ENCODE measurements at regions of chr10 and their contacts with region 1.

Region 1: DNA sequence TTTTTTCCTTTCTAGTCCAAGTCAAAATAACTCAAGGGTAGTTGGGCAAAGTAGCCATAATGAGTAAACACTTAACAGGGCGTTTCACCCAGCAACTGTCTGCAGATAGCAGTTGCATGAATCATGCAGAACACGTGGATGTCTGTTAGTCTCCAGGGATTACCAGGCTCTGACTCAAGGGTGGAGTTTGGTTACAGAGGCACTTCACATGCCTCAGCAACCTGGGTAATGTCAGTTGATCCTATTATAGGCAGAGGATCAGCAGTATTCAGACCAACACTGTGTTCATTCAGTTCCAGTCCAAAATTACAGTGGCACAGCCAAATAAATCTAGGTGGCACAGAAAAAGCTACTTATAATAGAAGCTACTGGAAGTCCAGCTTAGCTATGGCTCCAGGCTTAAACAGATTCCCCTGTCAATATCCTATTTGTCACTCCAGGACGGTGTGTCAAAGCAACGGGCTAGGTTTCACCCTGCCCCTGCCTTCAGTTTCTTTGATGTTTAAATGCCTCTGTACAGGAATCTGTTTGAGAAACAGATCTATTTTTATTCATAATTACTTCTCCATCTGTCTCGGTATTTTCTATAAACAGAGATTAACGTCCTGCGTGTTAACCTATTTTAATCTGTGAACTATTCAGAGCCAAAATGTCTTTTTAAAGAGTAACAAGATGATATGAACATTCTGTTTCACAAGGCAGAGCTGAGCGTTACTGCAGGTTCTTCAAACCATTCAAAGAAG is 162.7 kb upstream of the AKR1E2 start:
- DNase-seq: peak; percentile 15
- ATAC-seq: peak; percentile 64
- H3K4me3 ChIP-seq: no peak overlapping the region
- H3K27ac ChIP-seq: no peak overlapping the region
- H3K4me1 ChIP-seq: no peaks in the 10 kb centered on the region
- H3K27me3 ChIP-seq: no peaks in the 10 kb centered on the region
- CTCF ChIP-seq: no peak
- EP300 ChIP-seq: no peak
- POLR2A ChIP-seq: no peak
- RAD21 ChIP-seq: no peak

Region 2: GRCh38 chr10:3248888-3249758 is 1414.2 kb before region 1 on chr10:
- CTCF ChIA-PET with region 1: interaction called, 3 read pairs
- POLR2A ChIA-PET with region 1: no interaction called
- RAD21 ChIA-PET with region 1: no interaction called
- SMC1A ChIA-PET with region 1: no interaction called
- in situ Hi-C with region 1: loop called (anchors 10 kb)
- intact Hi-C with region 1: no loop called
- DNase-seq: no peak
- ATAC-seq: no peak
- H3K4me3 ChIP-seq: no peak overlapping the region
- H3K27ac ChIP-seq: no peak overlapping the region
- H3K4me1 ChIP-seq: no peaks in the 10 kb centered on the region
- H3K27me3 ChIP-seq: no peaks in the 10 kb centered on the region; a peak in 1 of 4 replicates
- CTCF ChIP-seq: no peak
- EP300 ChIP-seq: no peak
- POLR2A ChIP-seq: no peak
- RAD21 ChIP-seq: no peak

Region 3: GRCh38 chr10:4775808-4776207 is 112.5 kb after region 1 on chr10:
- CTCF ChIA-PET with region 1: no interaction called
- POLR2A ChIA-PET with region 1: no interaction called
- RAD21 ChIA-PET with region 1: no interaction called
- SMC1A ChIA-PET with region 1: no interaction called
- in situ Hi-C with region 1: no loop called
- intact Hi-C with region 1: no loop called
- DNase-seq: no peak
- ATAC-seq: no peak
- H3K4me3 ChIP-seq: no peak overlapping the region
- H3K27ac ChIP-seq: no peak overlapping the region
- H3K4me1 ChIP-seq: no peaks in the 10 kb centered on the region
- H3K27me3 ChIP-seq: no peaks in the 10 kb centered on the region
- CTCF ChIP-seq: no peak
- EP300 ChIP-seq: no peak
- POLR2A ChIP-seq: no peak
- RAD21 ChIP-seq: no peak